AG04450 (cell line): ENCODE measurements at regions of chr3 and their contacts with region 1.

Region 1: GRCh38 chr3:14508961-14509795 is 31.0 kb downstream of the GRIP2 start:
- DNase-seq: no peak
- H3K4me3 ChIP-seq: no peak overlapping the region
- H3K27ac ChIP-seq: no peak overlapping the region
- H3K27me3 ChIP-seq: peaks cover 10% of the 10 kb centered on the region
- CTCF ChIP-seq: peak; percentile 84

Region 2: GRCh38 chr3:14113965-14114635 is 395.1 kb before region 1 on chr3:
- CTCF ChIA-PET with region 1: interaction called, 15 read pairs
- POLR2A ChIA-PET with region 1: no interaction called
- DNase-seq: no peak
- H3K4me3 ChIP-seq: no peak overlapping the region
- H3K27ac ChIP-seq: no peak overlapping the region
- H3K27me3 ChIP-seq: no peaks in the 10 kb centered on the region
- CTCF ChIP-seq: peak; percentile 37

Region 3: GRCh38 chr3:14345308-14346150 is 163.6 kb before region 1 on chr3:
- CTCF ChIA-PET with region 1: no interaction called
- POLR2A ChIA-PET with region 1: no interaction called
- DNase-seq: no peak
- H3K4me3 ChIP-seq: no peak overlapping the region
- H3K27ac ChIP-seq: no peak overlapping the region
- H3K27me3 ChIP-seq: peaks cover 22% of the 10 kb centered on the region
- CTCF ChIP-seq: no peak

Region 4: DNA sequence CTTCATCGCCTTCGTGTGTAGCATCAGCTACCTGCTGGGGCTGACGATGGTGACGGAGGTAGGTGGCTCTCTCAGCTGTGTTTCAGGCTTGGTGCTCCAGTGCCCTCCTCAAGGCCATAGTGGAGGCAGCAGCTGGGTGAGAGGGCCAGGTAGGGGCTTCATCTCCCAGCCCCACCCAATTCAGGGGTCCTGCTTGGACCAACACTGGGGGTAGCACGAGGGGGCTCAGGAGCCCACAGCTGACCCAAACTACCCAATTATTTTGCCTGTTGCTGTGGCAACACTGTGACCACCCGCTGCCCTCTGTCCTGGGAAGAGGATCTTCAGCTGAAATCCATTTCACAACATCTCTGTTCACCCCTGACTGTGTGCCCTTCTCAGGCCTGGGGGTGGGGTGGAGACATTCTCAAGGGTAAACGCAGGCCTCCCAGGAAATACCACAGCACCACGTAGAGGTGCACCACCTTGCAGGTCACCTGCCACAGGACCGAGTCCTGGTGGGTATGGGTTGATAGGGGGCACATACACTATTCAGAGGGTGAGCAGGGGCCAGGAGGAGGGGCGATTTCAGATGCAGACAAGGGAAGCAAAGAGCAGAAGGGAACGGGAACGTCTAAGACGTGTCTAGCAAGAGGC is 31.8 kb before region 1 on chr3:
- CTCF ChIA-PET with region 1: interaction called, 16 read pairs
- POLR2A ChIA-PET with region 1: no interaction called
- DNase-seq: no peak
- H3K4me3 ChIP-seq: no peak overlapping the region
- H3K27ac ChIP-seq: no peak overlapping the region
- H3K27me3 ChIP-seq: no peaks in the 10 kb centered on the region
- CTCF ChIP-seq: no peak

Region 5: DNA sequence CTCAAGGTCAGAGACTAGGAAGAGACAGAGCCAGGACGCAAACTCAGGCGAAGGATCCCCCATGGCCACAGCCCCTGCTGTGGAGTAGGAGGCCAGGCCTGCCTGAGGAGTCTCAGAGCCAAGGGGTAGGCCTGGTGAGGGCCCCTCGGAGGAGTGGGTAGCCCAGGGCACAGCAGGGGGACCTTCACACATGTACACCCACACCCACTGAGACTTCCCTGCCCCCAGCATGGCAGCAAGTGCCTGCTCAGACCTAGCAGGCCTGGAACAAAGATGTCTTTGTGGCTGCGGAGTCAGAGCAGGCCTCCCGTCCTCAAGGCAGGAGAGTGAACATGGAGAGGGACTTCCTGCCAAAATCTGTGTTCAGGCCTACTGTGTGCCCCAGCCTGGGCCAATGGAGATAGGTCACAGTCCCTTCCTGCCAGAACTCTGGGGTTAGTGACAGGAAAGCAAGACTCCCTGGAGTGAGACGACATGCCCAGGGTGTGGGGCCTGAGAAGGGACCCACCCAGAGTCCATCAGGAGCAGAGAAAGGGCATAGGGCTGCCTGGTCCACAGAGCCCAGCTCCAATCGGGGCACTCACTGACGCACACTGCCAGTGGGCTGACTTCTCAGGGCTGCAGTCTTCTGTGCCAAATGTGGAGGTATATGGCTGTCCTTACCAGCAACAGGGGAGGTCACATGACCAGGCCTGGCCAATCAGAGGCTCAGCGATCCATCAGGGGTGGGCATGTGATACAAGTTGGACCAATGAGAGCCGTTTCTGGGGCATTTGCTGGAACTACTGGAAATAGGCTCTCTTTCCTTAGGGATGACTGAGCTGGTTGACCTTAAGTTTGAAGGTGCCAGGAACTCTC is 28.6 kb after region 1 on chr3:
- CTCF ChIA-PET with region 1: interaction called, 11 read pairs
- POLR2A ChIA-PET with region 1: no interaction called
- DNase-seq: no peak
- H3K4me3 ChIP-seq: no peak overlapping the region
- H3K27ac ChIP-seq: no peak overlapping the region
- H3K27me3 ChIP-seq: peaks cover 40% of the 10 kb centered on the region
- CTCF ChIP-seq: no peak

Region 6: DNA sequence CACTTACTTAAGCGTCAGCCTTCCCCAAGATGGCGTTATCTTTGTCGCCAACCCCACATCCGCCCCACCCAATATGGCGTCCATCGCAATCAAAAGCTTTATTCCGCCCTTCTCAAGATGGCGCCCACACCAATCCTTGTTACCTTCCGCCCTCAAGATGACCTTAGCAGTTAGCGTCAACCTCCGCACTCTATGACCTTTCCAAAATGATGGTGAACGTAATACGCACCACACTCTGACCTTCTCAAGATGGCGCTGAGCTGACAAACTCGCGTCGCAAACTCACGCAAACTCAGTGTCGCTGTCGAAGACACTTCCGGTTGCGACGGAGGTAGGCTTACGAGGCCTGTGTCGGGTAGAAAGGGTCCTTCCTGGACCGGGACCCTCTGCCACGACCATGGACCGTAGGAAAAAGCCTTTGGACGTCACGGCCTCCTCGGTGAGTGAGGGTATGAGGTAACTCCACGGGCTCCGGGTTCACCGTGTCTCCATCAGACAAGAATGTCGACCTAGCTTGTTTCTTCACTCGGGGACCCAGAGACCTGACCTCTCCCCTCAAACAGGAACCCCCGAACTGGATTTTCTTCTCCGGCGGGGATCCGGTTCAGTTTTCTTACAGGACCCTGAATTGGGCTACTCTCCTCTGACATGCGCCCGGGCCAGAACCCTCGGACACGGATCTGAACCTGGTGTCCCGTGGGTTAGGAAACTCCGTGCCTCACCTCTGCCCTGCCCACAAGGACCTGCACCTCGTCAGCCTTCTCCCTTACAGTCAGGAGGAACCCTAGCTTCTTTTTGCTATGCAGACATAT is 142.5 kb after region 1 on chr3 and contains the start of gene CCDC174:
- CTCF ChIA-PET with region 1: interaction called, 11 read pairs
- POLR2A ChIA-PET with region 1: no interaction called
- DNase-seq: peak; percentile 97
- H3K4me3 ChIP-seq: peak within 1 kb of the TSS; percentile 98
- H3K27ac ChIP-seq: peak within 1 kb of the TSS; percentile 88
- H3K27me3 ChIP-seq: peaks cover 2% of the 10 kb centered on the region
- CTCF ChIP-seq: 0 out of 2 replicates have a peak, but pooled peaks have one; percentile 5
- polyA plus RNA-seq, gene CCDC174: 10.0 and 13.9 TPM in 2 replicates

Region 7: GRCh38 chr3:14685179-14685578 is 176.0 kb after region 1 on chr3:
- CTCF ChIA-PET with region 1: no interaction called
- POLR2A ChIA-PET with region 1: no interaction called
- DNase-seq: no peak
- H3K4me3 ChIP-seq: no peak overlapping the region
- H3K27ac ChIP-seq: no peak overlapping the region
- H3K27me3 ChIP-seq: peaks cover 2% of the 10 kb centered on the region
- CTCF ChIP-seq: no peak

Region 8: GRCh38 chr3:14921078-14921616 is 412.0 kb after region 1 on chr3:
- CTCF ChIA-PET with region 1: interaction called, 22 read pairs
- POLR2A ChIA-PET with region 1: no interaction called
- DNase-seq: peak; percentile 72
- H3K4me3 ChIP-seq: no peak overlapping the region
- H3K27ac ChIP-seq: no peak overlapping the region
- H3K27me3 ChIP-seq: peaks cover 7% of the 10 kb centered on the region
- CTCF ChIP-seq: peak; percentile 95